ENCODE measurements at regions of chr9 and their contacts with region 1.

Region 1: DNA sequence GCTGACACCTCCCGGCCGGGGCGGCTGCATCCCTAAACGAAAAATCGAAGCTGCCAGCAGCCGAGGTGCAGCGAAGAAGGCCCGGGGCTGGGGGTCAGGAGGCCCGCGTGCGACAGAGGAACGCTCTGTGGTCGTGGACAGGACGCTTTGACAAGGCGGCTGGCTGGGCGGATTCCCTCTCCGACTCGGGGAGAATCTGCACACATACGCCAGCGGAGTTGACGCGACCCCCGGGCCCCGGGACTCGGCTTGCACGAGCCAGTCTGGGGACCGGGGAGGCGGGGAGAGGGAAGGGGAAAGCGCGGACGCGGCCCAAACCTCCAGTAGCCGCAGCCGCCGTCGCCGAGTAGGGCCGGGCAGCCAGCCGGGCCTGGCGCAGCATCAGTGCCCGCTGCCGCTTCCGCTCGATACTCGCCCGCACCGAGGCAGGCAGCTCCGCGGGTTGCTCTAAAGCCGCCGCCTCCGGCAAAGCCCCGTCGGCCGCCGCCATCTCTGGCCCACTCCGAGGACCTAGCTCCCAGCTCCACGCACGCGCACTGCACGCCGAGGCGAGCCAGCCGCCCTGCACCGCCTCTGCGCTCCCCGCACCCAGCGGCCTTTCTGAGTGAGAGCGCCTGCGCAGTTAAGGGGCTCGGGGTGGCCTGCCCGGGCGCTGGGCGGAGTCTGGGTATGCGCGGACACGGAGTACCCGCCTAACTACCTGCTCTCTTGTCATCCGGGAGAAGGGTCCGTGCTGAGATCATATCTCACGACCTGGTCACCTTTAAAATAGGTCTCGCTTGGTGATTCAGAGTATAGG is at the start of gene XPA:
- DNase-seq: peak; percentile 96 to 99
- ATAC-seq: peak; percentile 91 to 98 (median 94)
- H3K4me3 ChIP-seq: peak within 1 kb of the TSS; percentile 93
- H3K4me3 Mint-ChIP-seq: peak within 1 kb of the TSS; percentile 89
- H3K27ac ChIP-seq: peak within 1 kb of the TSS; percentile 89
- H3K27ac Mint-ChIP-seq: peak within 1 kb of the TSS; percentile 93 to 95
- H3K4me1 ChIP-seq: peaks cover 16% of the 10 kb centered on the region
- H3K4me1 Mint-ChIP-seq: peaks cover 46 to 55% of the 10 kb centered on the region in 2 donors
- H3K27me3 ChIP-seq: no peaks in the 10 kb centered on the region
- H3K27me3 Mint-ChIP-seq: peaks cover 10 to 15% of the 10 kb centered on the region in 2 donors
- CTCF ChIP-seq: no peak
- total RNA-seq, gene XPA: 21.7 to 28.4 (median 25.6) TPM

Region 2: DNA sequence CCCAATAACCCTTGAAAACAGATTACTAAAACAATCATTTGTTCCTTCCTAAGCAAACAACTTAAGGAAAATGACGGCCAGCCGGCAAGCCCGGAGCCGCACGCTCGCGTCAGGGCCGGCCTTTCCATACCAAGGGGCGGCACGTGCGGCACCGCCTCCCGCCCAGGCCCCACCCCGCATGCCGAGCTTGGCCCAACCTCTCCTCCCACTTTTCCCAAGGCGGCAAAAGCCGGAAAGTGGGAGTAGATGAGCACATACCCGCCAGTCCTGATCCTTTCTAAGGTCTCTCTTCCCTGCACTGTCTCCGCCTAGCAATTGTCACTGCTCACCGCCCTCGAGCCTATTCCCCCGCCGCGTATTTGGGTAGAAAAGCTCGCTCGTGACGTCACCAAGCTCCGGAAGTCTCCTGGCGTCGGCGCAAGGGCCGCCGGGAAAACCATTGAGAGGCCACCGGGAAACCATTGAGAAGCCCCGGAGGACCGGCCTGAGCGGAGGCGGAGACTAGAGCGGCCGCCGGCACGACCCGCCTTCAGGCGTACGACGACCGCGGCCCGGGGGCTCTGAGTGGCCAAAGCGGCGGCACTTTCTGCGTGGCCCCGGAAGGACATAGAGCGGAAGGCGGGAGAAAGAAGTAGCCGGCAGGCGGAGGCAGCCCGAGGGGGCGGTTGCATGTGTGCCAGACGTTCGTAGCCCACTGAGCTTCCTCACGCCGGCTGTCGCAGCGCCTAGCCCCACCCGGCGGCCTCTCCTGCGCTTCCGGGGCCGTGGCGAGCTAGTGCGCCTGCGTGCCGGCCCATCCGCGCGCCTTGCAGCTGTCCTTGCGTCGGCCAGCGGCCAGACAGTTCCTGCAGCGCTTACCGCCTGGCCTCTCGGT is 63.8 kb before region 1 on chr9 and contains the starts of genes NCBP1 and TSTD2:
- intact Hi-C with region 1: loop called (anchors 1 kb)
- DNase-seq: peak; percentile 93 to 98
- ATAC-seq: peak; percentile 84 to 96 (median 89)
- H3K4me3 ChIP-seq: peak within 1 kb of the TSS; percentile 91
- H3K4me3 Mint-ChIP-seq: peak within 1 kb of the TSS; percentile 94
- H3K27ac ChIP-seq: peak within 1 kb of the TSS; percentile 93
- H3K27ac Mint-ChIP-seq: peak within 1 kb of the TSS; percentile 96 to 100
- H3K4me1 ChIP-seq: peaks cover 30% of the 10 kb centered on the region
- H3K4me1 Mint-ChIP-seq: peaks cover 45 to 65% of the 10 kb centered on the region in 2 donors
- H3K27me3 ChIP-seq: no peaks in the 10 kb centered on the region
- H3K27me3 Mint-ChIP-seq: no peaks in the 10 kb centered on the region
- CTCF ChIP-seq: no peak
- total RNA-seq, gene NCBP1: 39.3 to 55.2 (median 51.2) TPM
- total RNA-seq, gene TSTD2: 16.2 to 25.7 (median 24.7) TPM

Region 3: DNA sequence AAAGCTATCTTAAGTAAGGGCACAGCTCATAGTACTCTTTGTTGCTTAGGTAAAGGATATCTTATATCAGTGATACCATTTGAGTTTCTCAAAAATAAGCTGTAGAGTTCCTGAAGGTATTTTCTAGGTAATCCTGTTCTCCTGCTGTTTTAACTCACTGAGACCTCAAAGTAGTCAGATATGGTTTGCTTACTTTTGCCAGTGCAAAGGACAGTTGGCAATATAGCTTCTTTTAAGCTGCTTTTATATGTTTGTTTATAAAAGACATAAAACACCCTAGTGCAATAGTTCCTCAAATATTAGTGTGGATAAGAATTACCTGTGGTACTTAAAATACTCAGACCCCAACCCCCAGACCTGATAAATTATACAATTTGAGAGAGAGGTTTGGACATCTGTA is 51.3 kb before region 1 on chr9:
- intact Hi-C with region 1: no loop called
- DNase-seq: no peak
- ATAC-seq: no peak
- H3K4me3 ChIP-seq: no peak overlapping the region
- H3K4me3 Mint-ChIP-seq: no peak overlapping the region
- H3K27ac ChIP-seq: no peak overlapping the region
- H3K27ac Mint-ChIP-seq: no peak overlapping the region
- H3K4me1 ChIP-seq: no peaks in the 10 kb centered on the region
- H3K4me1 Mint-ChIP-seq: no peaks in the 10 kb centered on the region
- H3K27me3 ChIP-seq: no peaks in the 10 kb centered on the region
- H3K27me3 Mint-ChIP-seq: no peaks in the 10 kb centered on the region
- CTCF ChIP-seq: no peak

Measured in natural killer cell (primary cell).